Activated naive CD4-positive, alpha-beta T cell treated with anti-CD3 and anti-CD28 coated beads for 36 hours (primary cell): ENCODE measurements at regions of chr3 and their contacts with region 1.

Region 1: DNA sequence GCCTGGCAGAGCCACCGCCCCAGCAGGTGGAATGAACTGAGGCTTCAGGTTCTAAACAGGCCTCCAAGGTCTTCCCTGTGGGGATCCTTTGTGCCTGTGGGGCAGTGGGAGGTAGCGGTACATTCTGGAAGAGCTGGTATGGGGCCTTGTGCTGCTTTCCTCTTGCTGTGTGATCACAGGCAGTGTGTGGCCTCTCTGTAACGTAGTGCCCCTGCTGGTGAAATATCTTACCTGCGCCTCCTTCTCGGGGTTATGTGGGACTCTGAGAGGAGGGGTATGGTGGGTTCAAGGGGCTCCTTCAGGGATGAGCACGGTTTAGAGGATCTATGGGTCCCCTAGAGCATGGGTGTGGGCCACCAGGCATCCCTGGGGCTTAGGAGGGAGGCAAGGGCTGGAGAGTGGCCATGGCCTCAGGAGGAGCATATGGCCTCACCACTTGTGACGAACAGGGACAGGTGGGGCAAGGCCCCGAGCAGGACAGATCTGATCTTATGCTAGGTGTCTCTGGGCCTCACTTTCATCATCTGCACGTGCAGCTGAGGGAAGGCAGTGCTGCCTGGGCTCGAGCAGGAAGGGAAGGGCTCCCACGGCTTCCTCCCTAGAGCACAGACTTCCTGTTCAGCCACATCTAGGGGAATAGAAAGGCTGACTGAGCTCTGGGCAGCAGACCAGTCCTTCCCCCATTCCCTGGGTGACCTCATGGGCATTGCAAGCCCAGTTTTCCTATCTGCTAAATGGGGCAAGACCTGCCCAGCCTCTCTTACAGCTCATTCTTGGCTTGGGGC is 1.9 kb upstream of the ALS2CL start:
- DNase-seq: peak; percentile 73
- H3K4me3 Mint-ChIP-seq: peak overlapping the region; percentile 84
- H3K27ac Mint-ChIP-seq: peak overlapping the region; percentile 89
- H3K4me1 Mint-ChIP-seq: peaks cover 58% of the 10 kb centered on the region
- H3K27me3 Mint-ChIP-seq: no peaks in the 10 kb centered on the region

Region 2: DNA sequence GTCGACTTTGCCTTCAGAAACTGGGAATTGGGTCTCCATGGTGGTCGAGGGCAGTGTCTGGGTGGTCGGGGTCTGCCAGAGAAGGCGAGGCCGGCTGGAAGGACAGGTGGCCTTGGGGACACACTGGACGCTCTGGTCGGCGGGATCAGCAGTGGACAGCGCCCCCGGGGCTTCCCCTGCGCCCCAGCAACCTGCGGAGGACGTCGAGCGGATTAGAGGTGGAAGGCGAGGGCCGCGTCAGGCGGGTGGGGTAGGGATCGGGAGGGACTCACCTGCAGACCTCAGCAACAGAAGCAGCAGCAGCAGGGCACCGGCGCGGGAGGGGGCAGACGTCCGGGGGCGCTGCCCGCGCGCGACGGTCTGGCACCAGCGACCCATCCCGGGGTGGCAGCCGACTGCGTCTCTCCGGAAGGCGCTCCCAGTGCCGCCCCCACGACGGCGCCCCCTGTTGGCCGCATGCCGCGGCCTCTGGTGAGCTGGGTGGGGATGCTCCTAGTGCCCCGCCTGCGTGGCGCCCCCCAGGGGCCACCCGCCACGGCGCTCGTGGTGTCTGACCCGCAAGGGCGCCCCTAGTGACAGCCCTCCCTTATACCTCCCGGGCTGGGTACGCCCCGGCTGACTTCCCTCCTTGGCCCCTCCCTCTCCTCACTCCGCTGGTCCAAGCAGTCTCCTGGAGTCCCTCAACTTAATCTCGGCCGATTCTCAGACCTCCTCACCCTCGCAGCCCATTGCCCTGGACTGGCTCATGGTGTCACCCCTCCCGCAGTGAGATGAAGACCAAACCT is 22.3 kb after region 1 on chr3 and contains the start of gene PRSS50:
- CTCF ChIA-PET with region 1: no interaction called
- intact Hi-C with region 1: no loop called
- DNase-seq: peak; percentile 29
- H3K4me3 Mint-ChIP-seq: no peak within 1 kb of the TSS
- H3K27ac Mint-ChIP-seq: no peak within 1 kb of the TSS
- H3K4me1 Mint-ChIP-seq: no peaks in the 10 kb centered on the region
- H3K27me3 Mint-ChIP-seq: peaks cover 8% of the 10 kb centered on the region
- total RNA-seq, gene PRSS50: not detected

Region 3: DNA sequence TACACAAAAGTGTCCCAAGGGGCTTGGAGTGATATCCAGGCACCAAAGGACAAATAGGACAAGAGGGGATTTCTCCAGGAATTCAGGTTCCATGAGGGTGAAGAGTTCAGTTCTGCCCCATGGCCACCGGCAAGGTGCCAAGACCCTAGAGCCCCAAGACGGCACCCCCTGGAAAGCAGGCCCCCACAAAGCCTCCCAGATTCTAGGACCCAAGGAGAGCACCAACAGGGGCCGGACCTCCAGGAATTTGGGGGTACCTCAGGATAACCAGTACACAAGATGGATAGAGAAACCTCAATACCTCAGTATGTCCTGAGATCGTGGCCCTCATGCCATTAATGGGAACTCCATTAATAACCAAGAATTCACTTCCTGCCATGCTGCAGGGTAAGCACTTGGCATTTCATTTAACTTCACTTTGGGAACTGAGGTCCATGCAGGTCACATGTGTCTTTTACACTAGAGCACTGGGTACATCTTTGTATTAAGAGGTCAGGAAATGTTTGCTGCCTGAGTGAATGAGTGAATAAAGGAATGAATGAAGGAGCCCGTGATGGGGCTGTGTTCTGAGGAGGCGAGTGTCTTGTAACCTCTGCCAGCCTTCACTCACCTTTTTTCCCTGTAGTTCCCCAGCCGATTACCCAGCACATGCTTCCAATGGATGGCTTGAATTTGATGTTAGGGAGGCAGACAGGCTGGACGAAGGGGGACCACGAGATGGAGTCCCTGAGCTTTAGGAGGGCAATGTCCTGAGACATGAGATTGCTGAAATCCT is 37.8 kb after region 1 on chr3:
- CTCF ChIA-PET with region 1: no interaction called
- intact Hi-C with region 1: no loop called
- DNase-seq: no peak
- H3K4me3 Mint-ChIP-seq: no peak overlapping the region
- H3K27ac Mint-ChIP-seq: no peak overlapping the region
- H3K4me1 Mint-ChIP-seq: no peaks in the 10 kb centered on the region
- H3K27me3 Mint-ChIP-seq: no peaks in the 10 kb centered on the region

Region 4: GRCh38 chr3:46845791-46846623 is 150.6 kb after region 1 on chr3:
- CTCF ChIA-PET with region 1: interaction called, 5 read pairs
- intact Hi-C with region 1: loop called (anchors 5 kb)
- DNase-seq: peak; percentile 75
- H3K4me3 Mint-ChIP-seq: peak overlapping the region; percentile 70
- H3K27ac Mint-ChIP-seq: no peak overlapping the region
- H3K4me1 Mint-ChIP-seq: peaks cover 7% of the 10 kb centered on the region
- H3K27me3 Mint-ChIP-seq: no peaks in the 10 kb centered on the region

Region 5: GRCh38 chr3:46987743-46988401 is 292.5 kb after region 1 on chr3:
- CTCF ChIA-PET with region 1: no interaction called
- intact Hi-C with region 1: loop called (anchors 10 kb)
- DNase-seq: peak; percentile 94
- H3K4me3 Mint-ChIP-seq: peak overlapping the region; percentile 82
- H3K27ac Mint-ChIP-seq: peak overlapping the region; percentile 89
- H3K4me1 Mint-ChIP-seq: peaks cover 50% of the 10 kb centered on the region
- H3K27me3 Mint-ChIP-seq: no peaks in the 10 kb centered on the region

Region 6: GRCh38 chr3:47057212-47057671 is 361.9 kb after region 1 on chr3:
- CTCF ChIA-PET with region 1: no interaction called
- intact Hi-C with region 1: loop called (anchors 1 kb)
- DNase-seq: peak; percentile 72
- H3K4me3 Mint-ChIP-seq: no peak overlapping the region
- H3K27ac Mint-ChIP-seq: no peak overlapping the region
- H3K4me1 Mint-ChIP-seq: peaks cover 45% of the 10 kb centered on the region
- H3K27me3 Mint-ChIP-seq: no peaks in the 10 kb centered on the region